ENCODE measurements at regions of chr2 and their contacts with region 1.

Region 1: GRCh38 chr2:70403267-70404053 is 101.6 kb upstream of the FAM136A start:
- DNase-seq: peak; percentile 62
- H3K4me3 ChIP-seq: no peak overlapping the region
- H3K27ac ChIP-seq: peak overlapping the region in 3 of 4 donors; percentile 28 to 57 (median 50)
- H3K4me1 ChIP-seq: peaks cover 0 to 12% (median 4%) of the 10 kb centered on the region in 4 donors
- H3K27me3 ChIP-seq: no peaks in the 10 kb centered on the region
- CTCF ChIP-seq: no peak
- EP300 ChIP-seq: no peak
- POLR2A ChIP-seq: no peak

Region 2: DNA sequence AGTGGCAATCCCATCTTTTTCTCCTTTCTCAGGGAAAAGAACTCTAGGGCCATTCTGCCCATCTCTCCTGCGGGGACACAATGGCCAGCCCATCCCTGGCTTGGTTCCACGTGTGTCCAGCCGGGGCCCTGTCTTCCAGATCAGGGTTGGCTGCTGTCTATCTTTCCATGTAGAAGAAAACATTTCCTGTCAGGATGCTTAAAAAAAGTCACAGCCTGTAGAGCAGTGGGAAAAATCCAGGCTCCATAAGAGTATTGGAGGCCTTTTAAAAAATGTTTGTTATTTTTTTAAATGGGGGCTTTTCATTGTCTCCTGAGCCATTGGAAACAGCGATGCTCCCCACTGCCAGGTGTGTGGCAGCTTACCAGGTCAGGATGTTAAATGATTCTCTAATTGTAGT is 44.6 kb after region 1 on chr2:
- in situ Hi-C with region 1: no loop called
- intact Hi-C with region 1: loop called (anchors 5 kb)
- DNase-seq: no peak
- H3K4me3 ChIP-seq: no peak overlapping the region
- H3K27ac ChIP-seq: no peak overlapping the region
- H3K4me1 ChIP-seq: no peaks in the 10 kb centered on the region
- H3K27me3 ChIP-seq: no peaks in the 10 kb centered on the region
- CTCF ChIP-seq: no peak
- EP300 ChIP-seq: no peak
- POLR2A ChIP-seq: no peak

Region 3: DNA sequence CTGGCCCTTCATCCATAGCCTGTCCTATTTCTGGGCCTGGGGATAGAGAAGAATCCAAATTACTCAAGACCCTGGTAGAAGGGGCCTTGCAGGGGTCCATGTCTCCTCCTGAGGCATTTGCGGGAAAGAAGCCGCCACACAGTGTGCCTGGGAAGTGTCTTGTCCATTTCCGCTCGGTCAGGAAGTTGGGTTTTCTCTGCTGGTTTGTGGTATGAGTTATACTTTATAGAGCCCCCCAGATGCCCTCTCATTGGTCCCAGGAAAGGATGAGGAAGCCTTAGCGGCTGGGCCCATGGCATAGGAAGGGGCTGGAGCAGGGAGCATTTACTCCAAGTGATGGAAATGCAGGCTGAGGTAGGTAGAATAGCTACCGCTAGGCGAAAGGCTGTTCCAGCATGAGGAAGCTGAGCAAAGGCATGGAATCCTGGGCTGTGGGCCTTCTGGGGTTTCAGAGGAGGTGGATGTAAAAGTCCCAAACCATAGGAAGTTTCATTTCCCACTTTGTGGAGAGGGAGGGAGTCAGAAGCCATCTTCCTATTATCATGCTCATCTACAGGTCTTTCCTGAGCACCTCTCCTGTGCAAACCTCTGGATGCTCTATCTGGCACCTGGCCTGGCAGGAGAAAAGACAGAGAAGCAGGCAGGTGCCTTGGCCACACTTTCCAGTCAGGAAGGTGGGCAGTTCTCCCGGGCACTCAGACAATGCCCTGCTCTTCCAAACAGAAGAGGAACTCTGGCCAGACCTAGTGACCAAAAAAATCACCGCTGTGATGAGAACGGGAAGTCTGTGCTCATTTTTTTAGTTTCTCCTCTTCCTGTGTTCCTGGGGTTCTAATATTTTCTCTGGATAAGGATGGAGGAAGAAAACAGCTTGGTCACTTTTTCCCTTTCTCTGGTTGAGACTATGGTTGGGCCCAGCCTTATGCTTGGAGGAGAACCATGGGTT is 434.8 kb after region 1 on chr2:
- in situ Hi-C with region 1: no loop called
- intact Hi-C with region 1: no loop called
- DNase-seq: no peak
- H3K4me3 ChIP-seq: no peak overlapping the region
- H3K27ac ChIP-seq: no peak overlapping the region
- H3K4me1 ChIP-seq: no peaks in the 10 kb centered on the region
- H3K27me3 ChIP-seq: peaks cover 9% of the 10 kb centered on the region
- CTCF ChIP-seq: no peak
- EP300 ChIP-seq: no peak
- POLR2A ChIP-seq: no peak

Measured in transverse colon (tissue), 4 donors.